Lower lobe of right lung (tissue), 2 donors: ENCODE measurements at regions of chr6 and their contacts with region 1.

Region 1: DNA sequence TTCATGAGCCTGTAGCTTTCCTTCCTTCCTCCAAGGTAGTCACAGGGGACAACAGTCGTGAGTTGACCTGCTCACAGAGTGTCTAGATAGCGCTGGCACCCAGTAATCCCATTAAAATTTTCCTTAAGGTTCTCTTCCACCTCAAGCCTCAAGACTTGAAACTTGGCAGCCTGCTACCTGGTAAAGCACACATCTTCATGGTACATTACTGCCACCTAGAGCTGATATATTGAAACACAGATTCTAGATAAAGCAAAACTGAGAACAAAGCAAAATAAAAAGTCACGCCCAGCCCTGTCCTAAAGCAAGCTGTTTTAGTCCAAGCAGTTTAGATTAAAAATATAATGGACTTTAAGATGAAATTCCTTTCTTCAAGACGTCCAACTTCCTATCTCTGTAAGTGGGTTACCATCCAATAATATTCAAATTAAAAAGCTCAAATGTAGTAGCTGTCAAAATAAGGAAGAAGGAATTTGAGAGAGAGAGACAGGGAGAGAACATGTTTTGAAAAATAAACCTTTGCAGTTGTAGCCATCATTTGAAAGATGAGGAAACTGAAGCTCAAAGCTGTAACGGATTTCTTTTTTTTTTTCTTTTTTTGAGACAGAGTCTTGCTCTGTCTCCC is 50.7 kb upstream of the CD83 start:
- DNase-seq: no peak
- ATAC-seq: peak; percentile 87
- H3K4me3 ChIP-seq: no peak overlapping the region
- H3K27ac ChIP-seq: no peak overlapping the region
- H3K4me1 ChIP-seq: no peaks in the 10 kb centered on the region
- H3K27me3 ChIP-seq: peaks cover 6% of the 10 kb centered on the region
- CTCF ChIP-seq: peak; percentile 60

Region 2: GRCh38 chr6:13351271-13351670 is 715.6 kb before region 1 on chr6:
- intact Hi-C with region 1: no loop called
- DNase-seq: no peak
- ATAC-seq: no peak
- H3K4me3 ChIP-seq: no peak overlapping the region
- H3K27ac ChIP-seq: no peak overlapping the region
- H3K4me1 ChIP-seq: peaks cover 27% of the 10 kb centered on the region
- H3K27me3 ChIP-seq: no peaks in the 10 kb centered on the region
- CTCF ChIP-seq: no peak

Region 3: DNA sequence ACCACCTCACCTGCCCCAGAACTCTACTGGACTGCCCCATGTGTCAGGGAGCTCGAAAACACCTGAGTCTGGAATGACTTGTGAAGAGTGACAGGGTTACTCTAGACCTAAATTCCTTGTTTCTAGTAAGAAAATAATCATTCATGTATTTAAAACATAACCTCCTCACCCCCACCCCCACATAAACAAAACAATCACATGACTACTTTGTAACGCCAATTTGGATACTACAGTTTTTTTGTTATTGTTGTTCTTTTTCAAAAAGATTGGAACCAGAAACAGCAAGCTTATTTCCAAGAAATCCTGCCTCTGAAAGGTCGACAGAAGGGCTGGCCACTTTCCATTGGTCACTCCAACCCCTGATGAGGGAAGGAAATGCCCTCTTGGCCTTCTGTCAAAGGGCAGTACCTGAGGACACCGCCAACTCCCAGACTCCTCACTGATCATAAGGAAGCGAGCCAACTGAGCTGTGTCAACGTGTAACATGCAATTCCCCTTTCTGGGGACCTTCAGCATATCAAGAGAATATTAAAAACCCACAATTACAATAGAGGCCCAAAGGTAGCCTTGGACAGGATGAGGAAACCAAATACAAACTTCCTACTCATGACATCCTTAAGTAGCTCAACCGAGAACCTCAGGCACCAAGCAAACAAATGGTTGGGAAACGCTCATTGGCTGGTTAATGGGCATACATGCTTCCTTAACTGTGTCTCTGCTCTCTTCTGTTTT is 255.1 kb before region 1 on chr6:
- intact Hi-C with region 1: no loop called
- DNase-seq: no peak
- ATAC-seq: peak; percentile 2 to 5
- H3K4me3 ChIP-seq: no peak overlapping the region
- H3K27ac ChIP-seq: peak overlapping the region; percentile 28
- H3K4me1 ChIP-seq: peaks cover 39% of the 10 kb centered on the region
- H3K27me3 ChIP-seq: no peaks in the 10 kb centered on the region
- CTCF ChIP-seq: no peak

Region 4: GRCh38 chr6:13916230-13916944 is 150.5 kb before region 1 on chr6:
- intact Hi-C with region 1: loop called (anchors 10 kb)
- DNase-seq: no peak
- ATAC-seq: peak in 1 of 2 donors; percentile 27
- H3K4me3 ChIP-seq: no peak overlapping the region
- H3K27ac ChIP-seq: no peak overlapping the region
- H3K4me1 ChIP-seq: peaks cover 9% of the 10 kb centered on the region
- H3K27me3 ChIP-seq: peaks cover 11% of the 10 kb centered on the region
- CTCF ChIP-seq: no peak

Region 5: GRCh38 chr6:14026831-14027539 is 39.9 kb before region 1 on chr6:
- intact Hi-C with region 1: no loop called
- DNase-seq: no peak
- ATAC-seq: no peak
- H3K4me3 ChIP-seq: no peak overlapping the region
- H3K27ac ChIP-seq: no peak overlapping the region
- H3K4me1 ChIP-seq: no peaks in the 10 kb centered on the region
- H3K27me3 ChIP-seq: no peaks in the 10 kb centered on the region
- CTCF ChIP-seq: no peak

Region 6: DNA sequence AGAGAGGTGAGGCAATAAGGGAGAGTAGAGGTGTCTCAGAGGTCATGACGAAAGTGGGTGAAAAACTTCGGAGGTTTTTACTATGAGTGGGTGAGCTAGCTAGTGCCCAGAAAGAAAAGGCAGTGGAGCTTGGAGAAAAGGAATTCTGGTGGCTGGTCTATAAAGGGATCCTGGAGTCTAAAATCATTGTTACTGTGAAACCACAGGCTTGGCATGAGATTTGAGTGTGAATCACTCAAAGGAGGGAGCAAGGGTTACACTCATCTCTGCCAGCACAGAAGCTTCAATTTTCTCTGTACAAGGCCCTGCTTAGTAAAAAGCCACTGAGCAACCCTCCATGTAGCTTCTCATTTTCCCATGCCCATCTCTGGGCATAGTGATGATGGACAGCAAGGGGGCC is 98.2 kb after region 1 on chr6:
- intact Hi-C with region 1: no loop called
- DNase-seq: no peak
- ATAC-seq: no peak
- H3K4me3 ChIP-seq: no peak overlapping the region
- H3K27ac ChIP-seq: no peak overlapping the region
- H3K4me1 ChIP-seq: no peaks in the 10 kb centered on the region
- H3K27me3 ChIP-seq: no peaks in the 10 kb centered on the region
- CTCF ChIP-seq: no peak